Naive thymus-derived CD4-positive, alpha-beta T cell (primary cell): ENCODE measurements at regions of chr11 and their contacts with region 1.

Region 1: DNA sequence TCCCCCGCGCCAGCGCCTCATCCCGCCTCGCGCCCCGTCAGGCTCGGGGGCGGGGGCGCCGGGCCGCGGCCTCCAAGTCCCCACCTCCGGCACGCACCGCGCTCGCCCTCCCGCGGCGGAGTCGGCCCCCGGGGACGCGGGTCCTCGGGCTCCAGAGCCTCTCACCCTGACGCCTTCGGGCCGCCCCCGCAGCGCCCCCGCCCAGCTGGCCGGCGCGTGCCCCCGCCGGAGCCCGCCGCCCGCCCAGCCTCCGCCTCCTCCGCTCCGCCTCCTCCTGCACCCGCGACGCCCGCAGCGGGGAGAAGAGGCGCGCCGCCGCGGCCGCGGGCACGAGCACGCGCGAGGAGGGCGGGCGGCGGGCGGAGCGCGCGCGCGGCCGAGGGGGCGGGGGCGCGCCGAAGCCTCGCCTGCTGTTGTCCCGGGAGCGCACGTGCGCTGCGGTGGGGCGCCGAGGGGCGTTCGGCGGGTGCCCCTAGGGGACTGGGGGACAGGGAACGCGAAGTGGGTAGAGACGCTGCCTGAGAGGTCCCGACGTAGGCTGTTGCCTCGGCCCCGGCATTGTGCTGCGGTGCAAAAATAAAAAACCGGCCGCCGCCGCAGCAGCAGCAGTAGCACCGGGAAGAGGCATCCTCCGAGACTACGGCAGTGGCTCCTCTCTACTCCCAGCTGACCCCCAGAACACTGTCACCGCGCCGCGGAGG is 87.4 kb upstream of the ARHGAP32 start:
- DNase-seq: peak; percentile 70 to 90 (median 82)
- ATAC-seq: peak; percentile 94
- H3K4me3 ChIP-seq: peak overlapping the region; percentile 58
- H3K4me3 Mint-ChIP-seq: peak overlapping the region; percentile 74 to 91 (median 86)
- H3K27ac ChIP-seq: peak overlapping the region; percentile 49
- H3K27ac Mint-ChIP-seq: peak overlapping the region; percentile 69 to 91 (median 80)
- H3K4me1 ChIP-seq: peaks cover 4 to 6% of the 10 kb centered on the region in 2 donors
- H3K4me1 Mint-ChIP-seq: peaks cover 14 to 43% (median 33%) of the 10 kb centered on the region in 7 donors
- H3K27me3 ChIP-seq: peaks cover 0 to 3% of the 10 kb centered on the region in 2 donors
- H3K27me3 Mint-ChIP-seq: peaks cover 8 to 32% (median 17%) of the 10 kb centered on the region in 5 donors

Region 2: GRCh38 chr11:128965485-128965884 is 314.0 kb before region 1 on chr11:
- CTCF ChIA-PET with region 1: no interaction called
- POLR2A ChIA-PET with region 1: no interaction called
- intact Hi-C with region 1: loop called in 1 of 2 experiments (anchors 10 kb)
- DNase-seq: no peak
- ATAC-seq: peak; percentile 44
- H3K4me3 ChIP-seq: no peak overlapping the region
- H3K4me3 Mint-ChIP-seq: peak overlapping the region in 1 of 10 donors; percentile 70
- H3K27ac ChIP-seq: no peak overlapping the region
- H3K27ac Mint-ChIP-seq: peak overlapping the region in 1 of 9 donors; percentile 51
- H3K4me1 ChIP-seq: peaks cover 0 to 5% of the 10 kb centered on the region in 2 donors
- H3K4me1 Mint-ChIP-seq: peaks cover 0 to 47% (median 7%) of the 10 kb centered on the region in 7 donors
- H3K27me3 ChIP-seq: no peaks in the 10 kb centered on the region
- H3K27me3 Mint-ChIP-seq: no peaks in the 10 kb centered on the region

Region 3: DNA sequence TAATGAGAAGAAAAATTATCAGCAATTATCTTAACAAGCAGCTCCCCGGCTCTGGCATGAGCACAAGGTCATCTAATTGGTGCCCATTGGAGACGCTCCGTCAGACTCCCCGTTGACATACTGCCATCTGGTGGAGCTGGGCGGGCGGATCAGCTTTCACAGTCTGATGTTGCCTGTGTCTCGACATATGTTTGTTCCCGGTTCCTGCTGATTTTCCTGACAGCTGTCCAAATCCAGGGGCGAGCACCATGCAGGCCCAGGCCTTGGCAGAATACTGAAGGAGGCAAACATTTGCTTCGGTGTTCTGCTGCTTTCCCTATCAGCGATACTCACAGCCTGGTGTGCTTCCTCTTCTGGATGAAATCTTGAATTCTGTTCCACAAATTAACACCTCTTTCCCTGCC is 52.4 kb after region 1 on chr11:
- CTCF ChIA-PET with region 1: interaction called, 3 read pairs
- POLR2A ChIA-PET with region 1: interaction called, 3 read pairs
- intact Hi-C with region 1: loop called in 1 of 2 experiments (anchors 5 kb)
- DNase-seq: peak; percentile 18 to 65 (median 45)
- ATAC-seq: peak; percentile 77
- H3K4me3 ChIP-seq: no peak overlapping the region
- H3K4me3 Mint-ChIP-seq: peak overlapping the region in 1 of 10 donors; percentile 34
- H3K27ac ChIP-seq: no peak overlapping the region
- H3K27ac Mint-ChIP-seq: no peak overlapping the region
- H3K4me1 ChIP-seq: no peaks in the 10 kb centered on the region
- H3K4me1 Mint-ChIP-seq: peaks cover 0 to 8% (median 3%) of the 10 kb centered on the region in 7 donors
- H3K27me3 ChIP-seq: no peaks in the 10 kb centered on the region
- H3K27me3 Mint-ChIP-seq: peaks cover 0 to 6% (median 0%) of the 10 kb centered on the region in 5 donors

Region 4: DNA sequence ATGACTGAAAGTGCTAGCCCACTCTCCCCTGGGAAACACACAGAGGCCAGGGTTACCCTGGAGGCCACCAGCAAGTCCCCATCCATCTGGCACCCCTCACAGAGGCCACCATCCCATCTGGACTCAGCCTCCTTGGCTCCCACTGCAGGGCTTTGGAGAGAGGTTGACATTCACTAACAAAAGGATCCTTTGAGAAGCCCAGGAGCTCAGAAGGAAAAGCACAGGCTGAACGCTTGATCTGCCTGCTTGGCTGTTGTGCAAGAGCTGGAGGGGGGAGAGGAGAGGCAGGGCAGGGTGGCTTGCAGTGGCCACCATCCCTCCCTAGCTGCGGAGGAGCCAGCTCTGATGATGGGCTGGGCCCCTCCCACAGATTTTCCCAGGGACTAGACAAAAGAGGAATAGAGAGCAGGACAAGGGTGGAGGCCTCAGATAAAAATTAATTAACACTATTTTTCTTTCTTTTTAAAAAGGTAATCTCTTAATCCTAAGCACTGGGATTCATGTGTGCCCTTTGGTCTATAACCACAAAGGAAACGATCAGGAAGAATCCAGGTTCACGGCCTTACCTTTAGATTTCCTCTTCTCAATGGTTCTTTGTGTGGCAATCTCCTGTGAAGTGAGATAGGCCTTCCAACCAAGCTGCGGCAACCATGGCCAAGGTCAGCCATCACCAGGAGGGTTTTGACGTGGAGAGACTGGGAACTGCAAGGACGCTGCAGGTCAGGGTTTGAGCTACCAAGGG is 250.8 kb after region 1 on chr11:
- CTCF ChIA-PET with region 1: no interaction called
- POLR2A ChIA-PET with region 1: no interaction called
- intact Hi-C with region 1: no loop called
- DNase-seq: no peak
- ATAC-seq: no peak
- H3K4me3 ChIP-seq: no peak overlapping the region
- H3K4me3 Mint-ChIP-seq: no peak overlapping the region
- H3K27ac ChIP-seq: no peak overlapping the region
- H3K27ac Mint-ChIP-seq: no peak overlapping the region
- H3K4me1 ChIP-seq: no peaks in the 10 kb centered on the region
- H3K4me1 Mint-ChIP-seq: no peaks in the 10 kb centered on the region
- H3K27me3 ChIP-seq: no peaks in the 10 kb centered on the region
- H3K27me3 Mint-ChIP-seq: peaks cover 0 to 11% (median 6%) of the 10 kb centered on the region in 5 donors